GM12878 (cell line): ENCODE measurements at regions of chr17 and their contacts with region 1.

Region 1: GRCh38 chr17:40168262-40168832 is 8.9 kb upstream of the RAPGEFL1 start:
- DNase-seq: peak; percentile 15
- ATAC-seq: peak; percentile 83
- H3K4me3 ChIP-seq: no peak overlapping the region
- H3K27ac ChIP-seq: no peak overlapping the region
- H3K4me1 ChIP-seq: no peaks in the 10 kb centered on the region
- H3K27me3 ChIP-seq: no peaks in the 10 kb centered on the region
- CTCF ChIP-seq: peak; percentile 69 to 78 (median 69)
- EP300 ChIP-seq: no peak
- POLR2A ChIP-seq: no peak
- RAD21 ChIP-seq: peak; percentile 80

Region 2: DNA sequence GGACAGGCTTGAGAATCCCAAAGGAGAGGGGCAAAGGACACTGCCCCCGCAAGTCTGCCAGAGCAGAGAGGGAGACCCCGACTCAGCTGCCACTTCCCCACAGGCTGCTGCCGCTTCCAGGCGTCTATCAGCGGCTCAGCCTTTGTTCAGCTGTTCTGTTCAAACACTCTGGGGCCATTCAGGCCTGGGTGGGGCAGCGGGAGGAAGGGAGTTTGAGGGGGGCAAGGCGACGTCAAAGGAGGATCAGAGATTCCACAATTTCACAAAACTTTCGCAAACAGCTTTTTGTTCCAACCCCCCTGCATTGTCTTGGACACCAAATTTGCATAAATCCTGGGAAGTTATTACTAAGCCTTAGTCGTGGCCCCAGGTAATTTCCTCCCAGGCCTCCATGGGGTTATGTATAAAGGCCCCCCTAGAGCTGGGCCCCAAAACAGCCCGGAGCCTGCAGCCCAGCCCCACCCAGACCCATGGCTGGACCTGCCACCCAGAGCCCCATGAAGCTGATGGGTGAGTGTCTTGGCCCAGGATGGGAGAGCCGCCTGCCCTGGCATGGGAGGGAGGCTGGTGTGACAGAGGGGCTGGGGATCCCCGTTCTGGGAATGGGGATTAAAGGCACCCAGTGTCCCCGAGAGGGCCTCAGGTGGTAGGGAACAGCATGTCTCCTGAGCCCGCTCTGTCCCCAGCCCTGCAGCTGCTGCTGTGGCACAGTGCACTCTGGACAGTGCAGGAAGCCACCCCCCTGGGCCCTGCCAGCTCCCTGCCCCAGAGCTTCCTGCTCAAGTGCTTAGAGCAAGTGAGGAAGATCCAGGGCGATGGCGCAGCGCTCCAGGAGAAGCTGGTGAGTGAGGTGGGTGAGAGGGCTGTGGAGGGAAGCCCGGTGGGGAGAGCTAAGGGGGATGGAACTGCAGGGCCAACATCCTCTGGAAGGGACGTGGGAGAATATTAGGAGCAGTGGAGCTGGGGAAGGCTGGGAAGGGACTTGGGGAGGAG is 153.0 kb before region 1 on chr17 and contains the start of gene CSF3:
- CTCF ChIA-PET with region 1: interaction called, 24 read pairs
- POLR2A ChIA-PET with region 1: no interaction called
- RAD21 ChIA-PET with region 1: interaction called, 5 read pairs
- SMC1A ChIA-PET with region 1: interaction called, 3 read pairs
- in situ Hi-C with region 1: loop called (anchors 5 kb)
- intact Hi-C with region 1: loop called (anchors 5 kb)
- DNase-seq: no peak
- ATAC-seq: 0 out of 3 replicates have a peak, but pooled peaks have one; percentile 16
- H3K4me3 ChIP-seq: no peak within 1 kb of the TSS
- H3K27ac ChIP-seq: no peak within 1 kb of the TSS
- H3K4me1 ChIP-seq: peaks cover 8% of the 10 kb centered on the region
- H3K27me3 ChIP-seq: no peaks in the 10 kb centered on the region
- CTCF ChIP-seq: no peak
- EP300 ChIP-seq: no peak
- POLR2A ChIP-seq: no peak
- RAD21 ChIP-seq: no peak
- polyA plus RNA-seq, gene CSF3: 0.09 TPM in 1 of 2 experiments, not detected in the other

Region 3: GRCh38 chr17:40062329-40063186 is 105.8 kb before region 1 on chr17 and contains the start of gene THRA:
- CTCF ChIA-PET with region 1: interaction called, 4 read pairs
- POLR2A ChIA-PET with region 1: no interaction called
- RAD21 ChIA-PET with region 1: interaction called, 3 read pairs
- SMC1A ChIA-PET with region 1: interaction called, 4 read pairs
- in situ Hi-C with region 1: no loop called
- intact Hi-C with region 1: loop called (anchors 10 kb)
- DNase-seq: no peak
- ATAC-seq: peak; percentile 89
- H3K4me3 ChIP-seq: peak within 1 kb of the TSS; percentile 93
- H3K27ac ChIP-seq: no peak within 1 kb of the TSS
- H3K4me1 ChIP-seq: peaks cover 5% of the 10 kb centered on the region
- H3K27me3 ChIP-seq: peaks cover 10 to 11% of the 10 kb centered on the region in 2 experiments; a peak in 3 of 4 replicates
- CTCF ChIP-seq: peak in 1 of 3 experiments; percentile 27; a peak in 2 of 6 replicates
- EP300 ChIP-seq: no peak
- POLR2A ChIP-seq: no peak
- RAD21 ChIP-seq: no peak
- polyA plus RNA-seq, gene THRA: 0.03 to 0.07 TPM

Region 4: GRCh38 chr17:40121181-40122135 is 46.9 kb before region 1 on chr17 and contains the start of gene MSL1:
- CTCF ChIA-PET with region 1: interaction called, 14 read pairs
- POLR2A ChIA-PET with region 1: interaction called, 15 read pairs
- RAD21 ChIA-PET with region 1: interaction called, 11 read pairs
- SMC1A ChIA-PET with region 1: interaction called, 20 read pairs
- in situ Hi-C with region 1: no loop called
- intact Hi-C with region 1: no loop called
- DNase-seq: no peak
- ATAC-seq: peak; percentile 78
- H3K4me3 ChIP-seq: peak within 1 kb of the TSS; percentile 99
- H3K27ac ChIP-seq: peak within 1 kb of the TSS; percentile 71
- H3K4me1 ChIP-seq: peaks cover 6% of the 10 kb centered on the region
- H3K27me3 ChIP-seq: no peaks in the 10 kb centered on the region
- CTCF ChIP-seq: no peak
- EP300 ChIP-seq: no peak
- POLR2A ChIP-seq: peak; percentile 76
- RAD21 ChIP-seq: no peak
- polyA plus RNA-seq, gene MSL1: 11.1 to 18.0 TPM

Region 5: GRCh38 chr17:40139566-40140058 is 28.7 kb before region 1 on chr17:
- CTCF ChIA-PET with region 1: interaction called, 16 read pairs
- POLR2A ChIA-PET with region 1: interaction called, 4 read pairs
- RAD21 ChIA-PET with region 1: interaction called, 4 read pairs
- SMC1A ChIA-PET with region 1: interaction called, 12 read pairs
- in situ Hi-C with region 1: no loop called
- intact Hi-C with region 1: no loop called
- DNase-seq: no peak
- ATAC-seq: peak; percentile 20
- H3K4me3 ChIP-seq: peak overlapping the region; percentile 76
- H3K27ac ChIP-seq: peak overlapping the region; percentile 97
- H3K4me1 ChIP-seq: peaks cover 2% of the 10 kb centered on the region; the same call in 1 of the 2 replicates
- H3K27me3 ChIP-seq: no peaks in the 10 kb centered on the region
- CTCF ChIP-seq: no peak
- EP300 ChIP-seq: no peak
- POLR2A ChIP-seq: no peak
- RAD21 ChIP-seq: no peak

Region 6: GRCh38 chr17:40157973-40158372 is 10.4 kb before region 1 on chr17:
- CTCF ChIA-PET with region 1: interaction called, 30 read pairs
- POLR2A ChIA-PET with region 1: no interaction called
- RAD21 ChIA-PET with region 1: interaction called, 8 read pairs
- SMC1A ChIA-PET with region 1: interaction called, 14 read pairs
- in situ Hi-C with region 1: no loop called
- intact Hi-C with region 1: no loop called
- DNase-seq: no peak
- ATAC-seq: no peak
- H3K4me3 ChIP-seq: no peak overlapping the region
- H3K27ac ChIP-seq: 0 out of 2 replicates have a peak overlapping the region, but pooled peaks have one; percentile 19
- H3K4me1 ChIP-seq: peaks cover 12% of the 10 kb centered on the region
- H3K27me3 ChIP-seq: no peaks in the 10 kb centered on the region
- CTCF ChIP-seq: no peak
- EP300 ChIP-seq: no peak
- POLR2A ChIP-seq: no peak
- RAD21 ChIP-seq: no peak

Region 7: GRCh38 chr17:40191237-40192208 is 23.2 kb after region 1 on chr17:
- CTCF ChIA-PET with region 1: interaction called, 18 read pairs
- POLR2A ChIA-PET with region 1: interaction called, 3 read pairs
- RAD21 ChIA-PET with region 1: interaction called, 20 read pairs
- SMC1A ChIA-PET with region 1: interaction called, 9 read pairs
- in situ Hi-C with region 1: no loop called
- intact Hi-C with region 1: no loop called
- DNase-seq: peak; percentile 30
- ATAC-seq: peak; percentile 93
- H3K4me3 ChIP-seq: peak overlapping the region; percentile 83
- H3K27ac ChIP-seq: no peak overlapping the region
- H3K4me1 ChIP-seq: peaks cover 24% of the 10 kb centered on the region
- H3K27me3 ChIP-seq: no peaks in the 10 kb centered on the region; a peak in 1 of 4 replicates
- CTCF ChIP-seq: peak; percentile 82 to 91 (median 89)
- EP300 ChIP-seq: no peak
- POLR2A ChIP-seq: peak; percentile 57
- RAD21 ChIP-seq: peak; percentile 50; the same call in 1 of the 2 replicates

Region 8: DNA sequence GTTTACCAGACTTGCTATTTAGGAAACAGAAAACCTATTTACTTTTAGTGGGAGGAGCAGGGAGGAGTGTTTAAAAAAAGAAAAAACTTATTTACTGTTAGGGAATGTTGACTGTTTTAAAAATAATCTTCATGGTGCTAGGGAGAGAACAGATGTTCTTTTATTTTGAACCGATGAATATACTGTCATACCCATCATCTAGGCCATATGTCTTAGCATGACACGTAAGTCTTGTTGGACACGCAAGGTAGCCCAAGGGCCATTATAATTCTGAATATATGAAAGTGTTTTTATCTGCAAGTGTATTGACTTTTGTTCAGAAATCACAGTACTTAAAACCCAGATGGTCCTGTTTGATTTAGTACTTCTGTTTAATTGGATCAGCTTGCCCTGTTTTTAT is 62.3 kb after region 1 on chr17:
- CTCF ChIA-PET with region 1: no interaction called
- POLR2A ChIA-PET with region 1: no interaction called
- RAD21 ChIA-PET with region 1: no interaction called
- SMC1A ChIA-PET with region 1: no interaction called
- in situ Hi-C with region 1: no loop called
- intact Hi-C with region 1: no loop called
- DNase-seq: no peak
- ATAC-seq: no peak
- H3K4me3 ChIP-seq: no peak overlapping the region
- H3K27ac ChIP-seq: no peak overlapping the region
- H3K4me1 ChIP-seq: no peaks in the 10 kb centered on the region
- H3K27me3 ChIP-seq: no peaks in the 10 kb centered on the region
- CTCF ChIP-seq: no peak
- EP300 ChIP-seq: no peak
- POLR2A ChIP-seq: no peak
- RAD21 ChIP-seq: no peak